HepG2 (cell line): ENCODE measurements at regions of chr6 and their contacts with region 1.

Region 1: GRCh38 chr6:161542346-161542980 is 268.6 kb upstream of the AGPAT4 start:
- DNase-seq: no peak
- ATAC-seq: no peak
- H3K4me3 ChIP-seq: no peak overlapping the region
- H3K27ac ChIP-seq: no peak overlapping the region
- H3K4me1 ChIP-seq: no peaks in the 10 kb centered on the region
- H3K27me3 ChIP-seq: 0 out of 5 replicates have a peak, but pooled peaks cover 0 to 8% of the 10 kb centered on the region in 2 experiments
- CTCF ChIP-seq: no peak
- EP300 ChIP-seq: no peak
- POLR2A ChIP-seq: no peak
- RAD21 ChIP-seq: no peak

Region 2: GRCh38 chr6:160494576-160494975 is 1047.9 kb before region 1 on chr6:
- CTCF ChIA-PET with region 1: no interaction called
- POLR2A ChIA-PET with region 1: no interaction called
- in situ Hi-C with region 1: no loop called
- intact Hi-C with region 1: no loop called
- DNase-seq: no peak
- ATAC-seq: no peak
- H3K4me3 ChIP-seq: no peak overlapping the region
- H3K27ac ChIP-seq: no peak overlapping the region
- H3K4me1 ChIP-seq: no peaks in the 10 kb centered on the region
- H3K27me3 ChIP-seq: no peaks in the 10 kb centered on the region
- CTCF ChIP-seq: no peak
- EP300 ChIP-seq: no peak
- POLR2A ChIP-seq: no peak
- RAD21 ChIP-seq: no peak

Region 3: DNA sequence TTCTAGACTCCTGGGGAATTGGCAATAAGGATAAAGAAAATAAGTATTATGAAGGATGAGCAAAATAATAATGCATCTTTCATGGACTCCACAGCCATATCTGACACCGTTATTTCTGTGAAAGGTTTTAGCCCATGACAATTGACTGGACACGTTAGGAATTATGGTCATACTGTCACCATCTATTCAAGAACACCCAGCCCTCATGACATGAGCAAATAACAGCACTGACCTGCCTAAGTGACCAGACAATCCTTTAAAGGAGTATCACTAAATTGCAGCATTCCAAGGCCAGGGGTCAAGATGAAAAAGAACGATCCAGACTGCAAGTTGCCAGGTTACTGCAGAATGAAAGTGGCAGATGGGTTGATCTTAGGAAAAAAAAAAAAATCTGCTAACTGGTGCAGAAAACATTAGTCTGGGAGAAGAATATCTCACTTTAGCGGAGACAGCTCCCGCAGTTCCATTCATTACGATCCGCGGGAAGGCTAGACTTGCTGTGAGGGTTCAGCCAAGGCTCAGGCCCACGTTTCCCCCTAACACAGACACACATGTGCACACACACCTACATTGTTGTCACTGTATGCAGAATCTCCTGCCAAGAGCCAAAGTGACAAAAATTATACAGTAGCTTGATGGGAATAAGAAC is 30.9 kb before region 1 on chr6:
- CTCF ChIA-PET with region 1: no interaction called
- POLR2A ChIA-PET with region 1: no interaction called
- in situ Hi-C with region 1: no loop called
- intact Hi-C with region 1: loop called (anchors 1 kb)
- DNase-seq: no peak
- ATAC-seq: no peak
- H3K4me3 ChIP-seq: no peak overlapping the region
- H3K27ac ChIP-seq: no peak overlapping the region
- H3K4me1 ChIP-seq: no peaks in the 10 kb centered on the region
- H3K27me3 ChIP-seq: peaks cover 0 to 8% of the 10 kb centered on the region in 2 experiments; a peak in 1 of 5 replicates
- CTCF ChIP-seq: no peak
- EP300 ChIP-seq: no peak
- POLR2A ChIP-seq: no peak
- RAD21 ChIP-seq: no peak